ENCODE measurements at regions of chr4 and their contacts with region 1.

Region 1: DNA sequence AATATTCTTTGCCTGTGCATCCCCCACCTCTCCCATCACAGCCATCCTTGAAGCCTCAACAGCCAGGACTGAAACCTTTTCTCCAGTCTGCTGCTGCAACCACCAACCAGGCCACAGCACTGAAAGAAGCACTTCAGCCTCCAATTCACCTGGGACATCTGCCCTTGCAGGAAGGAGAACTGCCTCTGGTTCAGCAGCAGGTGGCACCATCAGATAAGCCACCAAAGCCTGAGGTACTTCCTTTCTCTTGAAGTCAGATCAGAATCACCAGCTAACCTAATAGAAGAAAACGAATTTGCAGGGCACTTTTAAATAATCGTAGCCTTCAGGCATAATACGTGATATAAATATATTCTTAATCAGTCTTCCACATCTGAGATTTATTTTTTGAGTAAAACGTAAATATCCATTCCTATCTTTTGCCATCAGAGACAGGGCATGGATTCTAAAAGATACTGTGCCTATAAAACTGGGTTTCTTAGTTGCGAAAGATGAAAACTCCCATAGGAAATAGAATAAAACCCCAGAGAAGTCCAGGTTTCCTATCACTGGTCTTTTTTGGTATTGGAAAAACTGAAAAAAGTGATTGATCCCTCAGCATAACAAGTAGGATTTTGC is 9.5 kb downstream of the AMBN start:
- DNase-seq: peak; percentile 29 to 72 (median 61)
- ATAC-seq: peak; percentile 90
- H3K4me3 ChIP-seq: no peak overlapping the region
- H3K4me3 Mint-ChIP-seq: no peak overlapping the region
- H3K27ac ChIP-seq: no peak overlapping the region
- H3K27ac Mint-ChIP-seq: no peak overlapping the region
- H3K4me1 ChIP-seq: no peaks in the 10 kb centered on the region
- H3K4me1 Mint-ChIP-seq: peaks cover 0 to 4% (median 0%) of the 10 kb centered on the region in 7 donors
- H3K27me3 ChIP-seq: no peaks in the 10 kb centered on the region
- H3K27me3 Mint-ChIP-seq: peaks cover 0 to 20% (median 4%) of the 10 kb centered on the region in 5 donors

Region 2: DNA sequence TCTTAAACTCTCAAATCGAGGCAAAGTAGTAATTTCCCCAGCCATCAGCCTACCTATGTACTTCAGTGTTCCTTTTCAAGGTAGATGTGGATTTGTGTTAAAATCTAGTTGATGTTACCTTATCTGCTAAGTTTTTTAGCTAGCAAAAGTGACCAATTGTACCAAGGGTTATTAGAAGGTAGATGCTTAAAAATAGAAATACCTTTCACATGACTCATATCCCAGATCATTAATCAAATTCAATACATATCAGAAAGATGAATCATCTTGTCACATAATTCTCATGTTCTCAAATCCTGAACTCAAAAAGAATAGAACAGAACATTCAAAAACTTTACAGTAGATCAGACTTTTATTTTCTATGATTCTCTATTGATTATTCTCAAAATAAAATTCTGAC is 30.5 kb after region 1 on chr4:
- CTCF ChIA-PET with region 1: no interaction called
- POLR2A ChIA-PET with region 1: no interaction called
- intact Hi-C with region 1: no loop called
- DNase-seq: no peak
- ATAC-seq: no peak
- H3K4me3 ChIP-seq: no peak overlapping the region
- H3K4me3 Mint-ChIP-seq: no peak overlapping the region
- H3K27ac ChIP-seq: no peak overlapping the region
- H3K27ac Mint-ChIP-seq: no peak overlapping the region
- H3K4me1 ChIP-seq: no peaks in the 10 kb centered on the region
- H3K4me1 Mint-ChIP-seq: peaks cover 0 to 6% (median 0%) of the 10 kb centered on the region in 7 donors
- H3K27me3 ChIP-seq: no peaks in the 10 kb centered on the region
- H3K27me3 Mint-ChIP-seq: peaks cover 7 to 22% (median 16%) of the 10 kb centered on the region in 5 donors

Region 3: DNA sequence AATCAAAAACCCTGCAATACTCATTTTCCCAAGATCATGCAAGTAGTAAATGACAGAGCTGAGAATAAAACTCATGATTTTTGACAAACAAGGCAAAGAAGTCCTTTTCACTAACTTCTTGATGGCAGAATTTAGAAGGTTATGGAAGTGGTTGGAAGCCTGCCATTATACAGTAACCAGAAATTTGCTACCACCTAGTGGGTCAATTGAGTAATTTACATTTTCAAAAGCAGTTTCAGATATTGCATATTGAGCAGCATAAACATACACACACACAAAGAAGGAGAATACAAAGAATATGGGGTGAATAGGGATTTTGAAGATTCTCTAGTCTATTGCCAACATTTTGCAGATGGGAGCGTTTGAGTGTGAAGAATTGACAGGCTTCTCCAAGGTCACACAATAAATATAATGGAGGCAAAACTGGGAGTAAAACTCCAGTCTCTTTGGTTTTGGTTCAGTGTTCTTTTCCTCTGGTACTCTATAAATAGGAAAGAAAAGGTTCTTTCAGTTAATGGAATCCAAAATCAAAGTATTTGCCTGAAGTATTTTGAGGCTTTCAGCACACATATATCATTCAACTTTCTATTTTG is 1112.2 kb after region 1 on chr4:
- CTCF ChIA-PET with region 1: no interaction called
- POLR2A ChIA-PET with region 1: no interaction called
- intact Hi-C with region 1: loop called in 1 of 2 experiments (anchors 1 kb)
- DNase-seq: peak in 5 of 9 donors; percentile 7 to 33 (median 10)
- ATAC-seq: no peak
- H3K4me3 ChIP-seq: no peak overlapping the region
- H3K4me3 Mint-ChIP-seq: no peak overlapping the region
- H3K27ac ChIP-seq: no peak overlapping the region
- H3K27ac Mint-ChIP-seq: no peak overlapping the region
- H3K4me1 ChIP-seq: no peaks in the 10 kb centered on the region
- H3K4me1 Mint-ChIP-seq: no peaks in the 10 kb centered on the region
- H3K27me3 ChIP-seq: no peaks in the 10 kb centered on the region
- H3K27me3 Mint-ChIP-seq: no peaks in the 10 kb centered on the region

Region 4: DNA sequence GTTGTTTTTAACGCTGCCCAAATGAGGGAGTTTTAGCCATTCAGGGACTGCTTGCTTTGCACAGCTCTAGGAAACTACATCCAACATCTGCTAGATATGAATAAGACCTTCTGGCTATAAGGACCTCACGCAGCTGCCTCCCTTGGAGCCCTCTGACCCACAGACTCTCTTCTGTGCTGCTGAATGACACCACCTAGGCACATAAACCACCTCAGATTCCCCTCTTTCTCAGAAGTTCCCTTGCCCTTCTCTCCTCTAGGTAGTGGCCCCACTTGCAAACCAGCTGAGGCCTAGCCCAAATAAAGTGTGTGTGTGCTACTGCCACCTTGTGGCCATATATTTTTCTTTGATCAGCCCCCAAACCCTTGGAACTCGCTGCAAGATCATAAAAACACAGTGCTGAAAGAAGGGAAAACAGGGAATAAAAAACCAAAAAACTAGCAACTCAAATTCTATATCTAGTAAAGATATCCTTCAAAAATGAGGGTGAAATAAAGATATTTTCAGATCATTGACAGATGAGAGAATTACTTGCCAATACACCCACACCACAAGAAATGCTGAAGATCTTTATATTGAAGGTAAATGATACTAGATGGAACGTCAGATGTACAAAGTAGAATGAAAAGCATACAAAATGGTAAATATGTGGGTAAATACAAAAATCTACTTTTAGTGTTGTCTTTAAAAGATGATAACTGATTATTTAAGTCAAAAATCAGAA is 1701.6 kb after region 1 on chr4:
- CTCF ChIA-PET with region 1: interaction called, 5 read pairs
- POLR2A ChIA-PET with region 1: no interaction called
- intact Hi-C with region 1: loop called in 1 of 2 experiments (anchors 1 kb)
- DNase-seq: peak in 8 of 9 donors; percentile 9 to 51 (median 32)
- ATAC-seq: peak; percentile 75
- H3K4me3 ChIP-seq: no peak overlapping the region
- H3K4me3 Mint-ChIP-seq: no peak overlapping the region
- H3K27ac ChIP-seq: no peak overlapping the region
- H3K27ac Mint-ChIP-seq: peak overlapping the region in 1 of 9 donors; percentile 0
- H3K4me1 ChIP-seq: no peaks in the 10 kb centered on the region
- H3K4me1 Mint-ChIP-seq: no peaks in the 10 kb centered on the region
- H3K27me3 ChIP-seq: no peaks in the 10 kb centered on the region
- H3K27me3 Mint-ChIP-seq: peaks cover 0 to 3% (median 0%) of the 10 kb centered on the region in 5 donors

Region 5: DNA sequence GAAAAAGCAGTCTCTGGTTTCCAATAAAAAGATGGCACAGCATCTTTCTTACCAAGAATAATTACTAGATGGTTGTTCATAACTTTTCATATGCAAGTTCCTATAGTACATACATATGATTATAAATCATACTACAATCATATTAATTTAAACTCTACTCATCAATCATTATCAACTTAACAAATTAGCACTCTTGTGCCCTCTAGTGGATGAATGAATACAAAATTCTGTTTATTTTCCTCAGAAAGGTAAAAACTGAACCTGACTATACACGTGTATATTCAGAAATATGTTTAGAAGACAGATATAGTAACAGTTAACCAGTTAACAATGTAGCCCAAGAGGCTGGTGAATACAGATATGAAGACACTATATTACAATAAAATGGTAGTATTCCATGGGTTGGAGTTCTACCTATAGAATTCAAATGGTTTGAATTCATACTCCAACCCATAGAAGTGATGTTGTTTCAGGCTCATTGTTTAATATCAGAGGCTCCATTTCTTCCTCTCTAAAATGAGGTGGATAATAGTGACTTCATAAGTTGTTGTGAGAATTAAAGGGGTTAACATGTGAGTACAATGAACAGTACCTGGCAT is 1867.5 kb after region 1 on chr4:
- CTCF ChIA-PET with region 1: no interaction called
- POLR2A ChIA-PET with region 1: no interaction called
- intact Hi-C with region 1: loop called in 1 of 2 experiments (anchors 5 kb)
- DNase-seq: no peak
- ATAC-seq: no peak
- H3K4me3 ChIP-seq: no peak overlapping the region
- H3K4me3 Mint-ChIP-seq: no peak overlapping the region
- H3K27ac ChIP-seq: no peak overlapping the region
- H3K27ac Mint-ChIP-seq: no peak overlapping the region
- H3K4me1 ChIP-seq: no peaks in the 10 kb centered on the region
- H3K4me1 Mint-ChIP-seq: no peaks in the 10 kb centered on the region
- H3K27me3 ChIP-seq: no peaks in the 10 kb centered on the region
- H3K27me3 Mint-ChIP-seq: peaks cover 0 to under 1% (median 0%) of the 10 kb centered on the region in 5 donors